Activated CD4-positive, alpha-beta memory T cell treated with anti-CD3 and anti-CD28 coated beads, Interleukin-2, amount 10 ng/mL, durations not matched to agents 7 days and 5 days (primary cell): ENCODE measurements at regions of chr9 and their contacts with region 1.

Region 1: GRCh38 chr9:126490871-126491567 is 122.7 kb upstream of the LMX1B start:
- DNase-seq: peak; percentile 60
- H3K4me3 Mint-ChIP-seq: no peak overlapping the region
- H3K27ac Mint-ChIP-seq: no peak overlapping the region
- H3K4me1 Mint-ChIP-seq: peaks cover 12% of the 10 kb centered on the region
- H3K27me3 Mint-ChIP-seq: peaks cover 29% of the 10 kb centered on the region

Region 2: DNA sequence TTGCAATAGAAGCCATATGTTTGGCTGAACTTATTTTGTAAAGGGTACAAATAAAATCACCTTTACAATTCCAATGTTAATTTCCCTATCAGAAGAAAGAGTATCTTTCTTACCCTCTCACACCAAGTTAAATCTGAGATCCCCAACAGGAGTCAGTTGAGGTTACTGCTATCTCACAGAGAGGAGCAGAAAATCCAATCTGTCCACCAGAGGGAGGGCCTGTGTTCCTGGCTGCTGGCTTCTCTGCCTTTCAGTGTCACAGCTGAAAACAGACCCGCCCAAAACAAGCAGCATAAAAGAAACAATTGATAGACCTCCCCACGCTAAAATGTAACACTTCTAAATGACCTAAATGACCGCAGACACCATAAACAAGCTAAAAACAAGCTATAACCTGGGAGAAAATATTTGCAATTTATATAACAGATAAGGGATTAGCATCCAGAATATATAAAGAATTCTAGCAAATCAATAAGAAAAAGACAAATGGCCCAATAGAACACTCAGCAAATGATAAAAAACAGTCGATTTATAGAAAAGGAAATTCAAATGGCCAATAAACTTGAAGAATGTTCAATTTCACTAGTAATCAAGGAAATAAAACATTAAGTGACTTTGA is 188.9 kb before region 1 on chr9:
- CTCF ChIA-PET with region 1: interaction called, 42 read pairs
- POLR2A ChIA-PET with region 1: no interaction called
- DNase-seq: peak; percentile 59
- H3K4me3 Mint-ChIP-seq: no peak overlapping the region
- H3K27ac Mint-ChIP-seq: no peak overlapping the region
- H3K4me1 Mint-ChIP-seq: peaks cover 2% of the 10 kb centered on the region
- H3K27me3 Mint-ChIP-seq: peaks cover 4% of the 10 kb centered on the region

Region 3: DNA sequence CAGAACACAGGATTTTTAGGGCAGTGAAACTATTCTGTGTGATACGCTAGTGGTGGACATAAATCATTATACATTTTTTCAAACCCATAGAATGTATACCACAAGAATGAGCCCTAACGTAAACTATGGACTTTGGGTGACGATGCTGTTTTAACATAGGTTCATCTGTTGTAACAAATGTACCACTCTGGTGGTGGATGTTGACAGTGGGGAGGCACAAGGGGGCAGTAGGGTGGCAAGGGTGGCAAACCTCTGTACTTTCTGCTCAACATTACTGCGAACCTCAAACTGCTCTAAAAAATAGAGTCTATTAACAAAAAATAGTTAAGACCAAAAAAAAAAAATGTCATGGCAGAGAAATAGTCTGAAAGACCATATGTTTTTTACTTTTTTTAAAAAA is 173.5 kb before region 1 on chr9:
- CTCF ChIA-PET with region 1: interaction called, 35 read pairs
- POLR2A ChIA-PET with region 1: interaction called, 3 read pairs
- DNase-seq: peak; percentile 26
- H3K4me3 Mint-ChIP-seq: no peak overlapping the region
- H3K27ac Mint-ChIP-seq: no peak overlapping the region
- H3K4me1 Mint-ChIP-seq: no peaks in the 10 kb centered on the region
- H3K27me3 Mint-ChIP-seq: peaks cover 13% of the 10 kb centered on the region

Region 4: DNA sequence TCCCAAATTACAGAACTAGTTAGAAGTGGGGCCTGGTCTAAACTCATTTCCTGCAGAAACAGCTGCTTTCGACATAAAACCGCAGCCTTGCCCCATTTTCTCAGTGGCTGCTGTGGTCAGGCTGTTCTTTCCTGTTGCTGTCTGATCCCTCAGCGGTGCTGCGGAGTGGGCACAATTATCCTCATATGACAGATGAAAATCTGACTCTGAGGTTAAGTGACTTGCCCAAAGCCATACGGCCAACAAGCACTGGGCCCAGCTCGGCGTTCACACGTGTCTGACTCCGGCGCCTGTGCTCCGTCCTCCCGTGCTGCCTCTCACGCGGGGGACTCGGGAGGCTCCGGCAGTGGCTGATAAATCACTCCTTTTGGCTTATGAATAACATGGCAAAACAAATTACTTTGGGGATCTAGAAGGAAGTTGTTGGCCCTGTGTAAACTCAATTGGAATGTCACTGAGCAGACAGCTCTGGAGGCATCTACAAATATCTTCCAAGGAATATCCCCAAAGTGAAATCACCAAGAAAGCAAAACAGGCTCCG is 19.9 kb before region 1 on chr9:
- CTCF ChIA-PET with region 1: interaction called, 23 read pairs
- POLR2A ChIA-PET with region 1: no interaction called
- DNase-seq: peak; percentile 92
- H3K4me3 Mint-ChIP-seq: peak overlapping the region; percentile 45
- H3K27ac Mint-ChIP-seq: peak overlapping the region; percentile 83
- H3K4me1 Mint-ChIP-seq: peaks cover 46% of the 10 kb centered on the region
- H3K27me3 Mint-ChIP-seq: peaks cover 64% of the 10 kb centered on the region

Region 5: GRCh38 chr9:126558051-126558665 is 67.1 kb after region 1 on chr9:
- CTCF ChIA-PET with region 1: interaction called, 11 read pairs
- POLR2A ChIA-PET with region 1: no interaction called
- DNase-seq: peak; percentile 73
- H3K4me3 Mint-ChIP-seq: no peak overlapping the region
- H3K27ac Mint-ChIP-seq: no peak overlapping the region
- H3K4me1 Mint-ChIP-seq: no peaks in the 10 kb centered on the region
- H3K27me3 Mint-ChIP-seq: peaks cover 35% of the 10 kb centered on the region